Colonic mucosa (tissue), 4 donors: ENCODE measurements at regions of chr10 and their contacts with region 1.

Region 1: GRCh38 chr10:121608469-121609190 is 10.4 kb upstream of the FGFR2 start:
- DNase-seq: peak; percentile 77
- H3K4me3 ChIP-seq: peak overlapping the region; percentile 16
- H3K27ac ChIP-seq: no peak overlapping the region
- H3K4me1 ChIP-seq: no peaks in the 10 kb centered on the region
- H3K27me3 ChIP-seq: no peaks in the 10 kb centered on the region
- CTCF ChIP-seq: peak; percentile 90

Region 2: DNA sequence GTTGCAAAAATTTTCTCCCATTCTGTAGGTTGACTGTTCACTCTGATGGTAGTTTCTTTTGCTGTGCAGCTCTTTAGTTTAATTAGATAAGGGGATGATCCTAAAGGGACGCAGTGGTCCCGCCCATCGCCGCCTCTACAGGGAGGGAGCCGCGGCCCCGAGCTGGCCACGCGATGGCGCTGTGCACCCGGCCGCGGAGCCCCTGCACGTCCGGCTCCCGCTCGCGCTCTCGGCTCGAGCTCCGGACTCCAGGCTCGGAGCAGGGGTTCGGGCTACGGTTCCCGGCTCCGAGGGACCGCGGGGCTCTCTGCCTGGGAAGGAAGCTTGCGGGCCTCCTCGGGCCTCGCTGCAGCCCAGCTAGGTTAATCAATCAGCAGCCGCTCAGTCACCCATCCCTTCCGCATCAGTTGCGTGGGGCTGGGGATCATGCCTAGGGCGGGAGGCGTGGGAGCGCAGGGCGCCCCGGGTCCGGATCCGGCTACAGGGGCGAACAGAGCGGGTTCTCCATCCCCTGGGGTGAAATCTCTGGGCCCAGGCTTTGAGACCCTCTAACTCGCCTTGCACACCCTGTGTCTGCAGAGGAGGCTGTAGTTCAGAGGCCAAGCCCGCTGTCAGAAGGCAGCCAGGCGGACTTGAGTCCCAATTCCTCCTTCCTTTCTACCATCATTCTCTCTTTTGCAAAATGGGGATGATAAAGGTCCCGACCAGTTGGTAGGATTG is 659.6 kb before region 1 on chr10:
- intact Hi-C with region 1: loop called (anchors 5 kb)
- DNase-seq: peak; percentile 68
- H3K4me3 ChIP-seq: peak overlapping the region; percentile 30
- H3K27ac ChIP-seq: no peak overlapping the region
- H3K4me1 ChIP-seq: no peaks in the 10 kb centered on the region
- H3K27me3 ChIP-seq: peaks cover 9% of the 10 kb centered on the region
- CTCF ChIP-seq: peak; percentile 94

Region 3: DNA sequence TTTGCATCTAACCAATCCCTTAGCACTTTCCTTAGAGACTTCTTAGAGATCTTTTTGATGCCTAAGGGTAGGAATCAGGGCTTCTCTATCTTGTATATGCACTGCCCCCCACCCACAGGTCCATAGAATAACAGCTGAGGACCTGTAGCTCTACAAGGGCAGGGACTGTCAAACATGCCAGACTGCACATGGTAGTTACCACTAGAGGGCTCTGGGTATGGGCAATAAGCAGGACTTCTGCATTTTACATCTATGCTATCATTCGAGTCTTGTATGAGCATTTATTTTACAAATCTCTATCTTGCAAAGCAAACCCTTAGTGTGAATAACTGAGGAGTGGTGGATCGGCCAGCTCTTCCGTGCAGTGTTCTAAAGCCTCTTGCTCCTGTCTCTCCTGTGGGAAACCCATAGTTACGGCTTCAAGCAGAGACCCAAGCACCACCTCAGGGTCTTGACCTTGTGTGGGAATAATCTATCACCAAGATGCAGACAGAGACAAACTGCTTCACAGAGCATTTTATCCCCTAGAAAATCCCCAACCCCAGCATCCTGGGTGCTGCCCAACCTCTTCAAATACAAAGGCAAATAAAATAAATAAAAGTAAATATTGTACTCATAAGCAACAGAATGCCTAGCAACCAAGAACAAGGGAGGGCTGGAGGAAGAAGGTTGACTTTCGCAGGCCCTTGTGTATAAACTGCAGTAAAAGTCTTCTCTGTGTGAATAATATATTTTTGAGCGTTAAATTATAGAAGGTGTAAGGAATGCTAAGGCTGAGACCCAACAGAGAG is 538.2 kb before region 1 on chr10:
- intact Hi-C with region 1: loop called (anchors 10 kb)
- DNase-seq: peak; percentile 60
- H3K4me3 ChIP-seq: no peak overlapping the region
- H3K27ac ChIP-seq: peak overlapping the region; percentile 31
- H3K4me1 ChIP-seq: peaks cover 8% of the 10 kb centered on the region
- H3K27me3 ChIP-seq: no peaks in the 10 kb centered on the region
- CTCF ChIP-seq: peak; percentile 60

Region 4: DNA sequence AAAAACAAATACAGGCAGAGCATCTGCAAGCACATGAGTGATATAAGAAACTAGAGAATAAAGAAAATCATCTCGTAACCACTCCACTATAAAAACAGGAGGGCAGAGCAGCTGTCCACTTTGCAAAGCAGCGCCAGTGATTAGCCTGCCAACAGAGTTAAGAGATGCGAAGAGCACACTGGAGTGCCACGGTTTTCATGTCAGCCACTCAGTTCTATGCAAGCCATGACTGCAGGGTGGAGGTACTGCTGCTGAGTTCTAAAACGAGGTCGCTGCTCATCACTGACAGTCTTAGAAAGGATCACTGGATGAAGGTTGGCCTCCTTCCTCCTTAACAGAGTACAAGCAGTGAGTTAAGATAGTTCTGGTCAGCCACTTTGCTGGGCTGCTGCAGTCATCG is 68.8 kb before region 1 on chr10:
- intact Hi-C with region 1: no loop called
- DNase-seq: no peak
- H3K4me3 ChIP-seq: no peak overlapping the region
- H3K27ac ChIP-seq: no peak overlapping the region
- H3K4me1 ChIP-seq: no peaks in the 10 kb centered on the region
- H3K27me3 ChIP-seq: no peaks in the 10 kb centered on the region
- CTCF ChIP-seq: no peak

Region 5: DNA sequence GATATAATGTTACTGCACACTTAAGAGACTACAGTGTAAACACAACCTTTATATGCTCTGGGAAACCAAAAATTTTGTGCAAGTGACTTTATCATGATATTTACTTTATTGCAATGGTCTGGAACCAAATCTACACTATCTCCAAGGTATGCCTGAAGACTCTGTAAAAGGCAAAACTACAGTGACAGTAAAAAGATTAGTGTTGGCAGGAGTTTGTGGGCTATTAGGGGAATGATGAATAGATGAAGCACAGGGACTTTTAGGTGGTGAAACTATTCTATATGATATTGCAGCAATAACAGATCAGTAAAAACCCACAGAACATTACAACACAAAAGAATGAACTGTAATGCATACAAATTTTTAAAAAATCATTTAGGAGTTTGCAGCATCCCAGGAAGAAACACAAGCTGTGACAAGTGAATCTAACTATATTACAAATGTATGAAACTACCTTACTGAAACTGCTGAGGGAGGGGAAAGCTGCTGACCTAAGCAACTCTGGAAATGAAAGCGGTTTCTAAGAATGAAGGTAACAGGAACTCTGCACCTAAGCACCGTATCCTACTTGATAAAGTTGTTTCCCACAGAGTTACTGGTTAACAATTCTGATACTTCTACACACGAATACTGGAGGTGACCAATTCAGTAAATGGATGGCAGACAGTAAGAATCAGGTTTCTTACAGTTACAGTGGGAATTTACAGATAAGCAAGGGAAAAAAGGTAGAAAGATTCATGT is 236.6 kb after region 1 on chr10:
- intact Hi-C with region 1: no loop called
- DNase-seq: no peak
- H3K4me3 ChIP-seq: no peak overlapping the region
- H3K27ac ChIP-seq: no peak overlapping the region
- H3K4me1 ChIP-seq: no peaks in the 10 kb centered on the region
- H3K27me3 ChIP-seq: no peaks in the 10 kb centered on the region
- CTCF ChIP-seq: no peak